Ovary (tissue), 10 donors: ENCODE measurements at regions of chr11 and their contacts with region 1.

Region 1: GRCh38 chr11:62694455-62695167 is 5.3 kb upstream of the LRRN4CL start:
- DNase-seq: peak; percentile 76 to 87 (median 79)
- H3K4me3 ChIP-seq: no peak overlapping the region
- H3K27ac ChIP-seq: no peak overlapping the region
- H3K4me1 ChIP-seq: peaks cover 2% of the 10 kb centered on the region
- H3K27me3 ChIP-seq: no peaks in the 10 kb centered on the region
- CTCF ChIP-seq: peak; percentile 56 to 65 (median 59)
- EP300 ChIP-seq: no peak
- POLR2A ChIP-seq: no peak

Region 2: DNA sequence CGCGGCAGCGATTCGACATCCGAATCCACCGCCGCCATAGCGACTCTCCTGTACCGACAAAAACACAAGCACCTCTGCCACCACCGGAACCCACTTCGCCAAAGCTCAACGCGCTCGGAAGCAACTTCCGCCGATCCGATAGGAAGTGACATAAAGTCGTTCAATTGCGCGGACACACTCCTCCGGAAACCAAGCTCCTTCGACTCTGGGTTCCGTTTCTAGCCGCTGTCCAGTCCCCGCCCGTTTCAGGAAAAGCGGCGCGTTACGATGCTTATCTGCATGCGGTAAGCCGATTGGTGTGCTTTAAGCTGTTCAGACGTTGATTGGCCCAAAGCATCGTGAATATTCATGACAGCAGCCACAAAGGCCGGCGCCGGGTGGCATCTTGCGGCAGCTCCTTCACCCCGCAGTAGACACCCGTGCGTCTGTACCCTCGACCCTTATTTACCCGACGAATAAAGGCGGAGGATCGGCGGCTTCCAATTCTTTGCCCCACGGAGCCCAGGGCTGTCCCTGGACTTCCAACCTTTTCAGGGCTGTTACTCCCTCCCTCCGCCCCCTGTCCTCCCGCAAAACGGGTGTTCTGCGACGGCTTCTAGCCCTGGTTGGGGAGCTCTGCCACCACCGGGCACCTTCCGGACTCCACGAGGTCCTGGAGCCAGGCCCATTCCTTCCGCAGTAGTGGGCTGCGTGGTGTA is 103.0 kb before region 1 on chr11 and contains the start of gene TUT1:
- intact Hi-C with region 1: loop called in 1 of 4 experiments (anchors 10 kb)
- DNase-seq: peak; percentile 93 to 97 (median 95)
- H3K4me3 ChIP-seq: peak within 1 kb of the TSS; percentile 86
- H3K27ac ChIP-seq: peak within 1 kb of the TSS; percentile 80 to 88
- H3K4me1 ChIP-seq: peaks cover 3% of the 10 kb centered on the region
- H3K27me3 ChIP-seq: no peaks in the 10 kb centered on the region
- CTCF ChIP-seq: no peak
- EP300 ChIP-seq: peak; percentile 5
- POLR2A ChIP-seq: peak; percentile 91
- total RNA-seq, gene TUT1: 6.9 to 27.3 (median 21.1) TPM

Region 3: GRCh38 chr11:62721994-62722393 is 27.4 kb after region 1 on chr11:
- intact Hi-C with region 1: no loop called
- DNase-seq: no peak
- H3K4me3 ChIP-seq: no peak overlapping the region
- H3K27ac ChIP-seq: no peak overlapping the region
- H3K4me1 ChIP-seq: no peaks in the 10 kb centered on the region
- H3K27me3 ChIP-seq: no peaks in the 10 kb centered on the region
- CTCF ChIP-seq: no peak
- EP300 ChIP-seq: no peak
- POLR2A ChIP-seq: no peak